Thyroid gland (tissue), 4 donors: ENCODE measurements at regions of chr2 and their contacts with region 1.

Region 1: DNA sequence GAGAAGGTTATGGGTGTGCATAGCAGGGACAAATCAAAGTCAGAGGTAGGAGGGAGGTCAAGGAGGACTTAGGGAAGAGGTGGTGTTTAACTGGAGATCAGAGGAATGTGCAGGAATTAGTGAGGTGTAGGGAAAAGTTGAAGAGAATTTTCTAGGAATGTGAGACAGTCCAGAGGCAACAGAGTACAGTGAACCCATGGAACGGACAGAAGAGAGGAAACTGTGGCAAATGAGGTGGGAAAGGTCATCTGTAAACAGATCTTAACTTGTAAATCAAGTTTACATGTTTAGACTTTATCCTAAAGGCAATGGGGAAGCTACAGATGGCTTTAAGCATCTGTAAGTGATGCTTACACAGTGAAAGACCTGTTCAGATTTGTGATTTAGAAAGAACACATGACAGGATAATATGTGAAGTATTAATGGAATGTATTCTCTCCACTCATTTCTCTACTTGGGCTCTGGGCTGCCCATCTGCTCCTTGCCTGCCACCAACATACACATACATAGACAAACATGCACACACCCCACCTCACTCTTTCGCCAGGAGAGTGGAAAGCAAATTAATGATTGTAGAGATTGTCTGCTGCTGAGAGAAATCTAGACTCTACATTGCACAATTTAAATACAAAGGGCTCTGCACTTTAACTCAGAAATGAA is 60.9 kb upstream of the NFE2L2 start:
- DNase-seq: no peak
- H3K4me3 ChIP-seq: no peak overlapping the region
- H3K27ac ChIP-seq: peak overlapping the region in 1 of 3 donors; percentile 24
- H3K4me1 ChIP-seq: peaks cover 0 to 20% of the 10 kb centered on the region in 2 donors
- H3K27me3 ChIP-seq: no peaks in the 10 kb centered on the region
- CTCF ChIP-seq: no peak
- POLR2A ChIP-seq: no peak

Region 2: GRCh38 chr2:177212106-177212890 is 113.1 kb before region 1 on chr2 and contains the start of gene HNRNPA3:
- intact Hi-C with region 1: no loop called
- DNase-seq: peak; percentile 99
- H3K4me3 ChIP-seq: peak within 1 kb of the TSS; percentile 82 to 95 (median 82)
- H3K27ac ChIP-seq: peak within 1 kb of the TSS; percentile 99 to 100 (median 100)
- H3K4me1 ChIP-seq: peaks cover 35 to 41% of the 10 kb centered on the region in 2 donors
- H3K27me3 ChIP-seq: no peaks in the 10 kb centered on the region
- CTCF ChIP-seq: peak in 1 of 6 experiments; percentile 22
- POLR2A ChIP-seq: peak; percentile 78 to 97
- total RNA-seq, gene HNRNPA3: 80.3 to 115 (median 82.3) TPM

Region 3: GRCh38 chr2:177263451-177264208 is 61.8 kb before region 1 on chr2:
- intact Hi-C with region 1: loop called (anchors 10 kb)
- DNase-seq: peak; percentile 98 to 99
- H3K4me3 ChIP-seq: peak overlapping the region; percentile 93 to 100 (median 96)
- H3K27ac ChIP-seq: peak overlapping the region; percentile 100
- H3K4me1 ChIP-seq: peaks cover 45 to 48% of the 10 kb centered on the region in 2 donors
- H3K27me3 ChIP-seq: no peaks in the 10 kb centered on the region
- CTCF ChIP-seq: peak; percentile 65 to 97 (median 85)
- POLR2A ChIP-seq: peak; percentile 53 to 88